H1 (cell line): ENCODE measurements at regions of chr2 and their contacts with region 1.

Region 1: DNA sequence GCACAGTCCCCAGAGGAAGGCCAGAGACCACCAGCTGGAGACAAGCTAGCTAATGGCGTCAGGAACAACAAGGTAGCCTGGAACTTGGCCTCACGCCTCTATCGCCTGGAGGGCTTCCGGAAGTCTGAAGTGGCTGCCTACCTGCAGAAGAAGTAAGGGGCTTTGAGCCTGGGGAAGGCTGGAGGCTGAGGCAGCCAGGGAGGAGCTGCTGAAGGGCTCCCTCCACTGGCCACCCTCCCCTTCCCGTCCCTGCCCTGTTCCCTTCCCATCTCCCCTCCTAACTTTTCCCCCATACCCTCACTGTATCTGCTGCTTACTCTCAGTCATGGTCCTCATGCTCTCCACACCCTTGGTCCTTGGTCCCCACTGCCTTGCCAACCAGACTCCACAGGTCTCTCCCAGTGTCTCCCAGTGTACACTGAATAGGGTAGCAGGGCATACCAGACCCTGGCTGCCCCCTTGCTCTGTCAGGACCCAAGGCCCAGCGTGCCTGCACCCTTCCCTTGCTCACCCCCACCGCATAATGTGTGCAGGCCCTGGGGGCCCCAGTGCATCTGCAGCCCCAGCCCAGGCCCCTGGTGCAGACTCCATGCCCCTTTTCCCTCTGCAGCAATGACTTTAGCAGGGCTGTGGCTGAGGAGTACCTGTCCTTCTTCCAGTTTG is 18.8 kb downstream of the PSD4 start:
- DNase-seq: no peak
- H3K4me3 ChIP-seq: no peak overlapping the region
- H3K27ac ChIP-seq: no peak overlapping the region
- H3K4me1 ChIP-seq: no peaks in the 10 kb centered on the region
- H3K27me3 ChIP-seq: no peaks in the 10 kb centered on the region
- CTCF ChIP-seq: peak; percentile 64 to 70 (median 69)
- EP300 ChIP-seq: no peak
- POLR2A ChIP-seq: no peak
- RAD21 ChIP-seq: peak; percentile 66 to 71

Region 2: GRCh38 chr2:113167115-113167932 is 25.2 kb before region 1 on chr2:
- CTCF ChIA-PET with region 1: interaction called, 31 read pairs
- POLR2A ChIA-PET with region 1: no interaction called
- DNase-seq: peak in 1 of 2 experiments; percentile 31
- H3K4me3 ChIP-seq: no peak overlapping the region
- H3K27ac ChIP-seq: no peak overlapping the region
- H3K4me1 ChIP-seq: peaks cover 0 to 4% (median 0%) of the 10 kb centered on the region in 4 experiments; a peak in 2 of 7 replicates
- H3K27me3 ChIP-seq: peaks cover 0 to 4% (median 3%) of the 10 kb centered on the region in 4 experiments; a peak in 1 of 7 replicates
- CTCF ChIP-seq: no peak
- EP300 ChIP-seq: no peak
- POLR2A ChIP-seq: no peak
- RAD21 ChIP-seq: no peak

Region 3: DNA sequence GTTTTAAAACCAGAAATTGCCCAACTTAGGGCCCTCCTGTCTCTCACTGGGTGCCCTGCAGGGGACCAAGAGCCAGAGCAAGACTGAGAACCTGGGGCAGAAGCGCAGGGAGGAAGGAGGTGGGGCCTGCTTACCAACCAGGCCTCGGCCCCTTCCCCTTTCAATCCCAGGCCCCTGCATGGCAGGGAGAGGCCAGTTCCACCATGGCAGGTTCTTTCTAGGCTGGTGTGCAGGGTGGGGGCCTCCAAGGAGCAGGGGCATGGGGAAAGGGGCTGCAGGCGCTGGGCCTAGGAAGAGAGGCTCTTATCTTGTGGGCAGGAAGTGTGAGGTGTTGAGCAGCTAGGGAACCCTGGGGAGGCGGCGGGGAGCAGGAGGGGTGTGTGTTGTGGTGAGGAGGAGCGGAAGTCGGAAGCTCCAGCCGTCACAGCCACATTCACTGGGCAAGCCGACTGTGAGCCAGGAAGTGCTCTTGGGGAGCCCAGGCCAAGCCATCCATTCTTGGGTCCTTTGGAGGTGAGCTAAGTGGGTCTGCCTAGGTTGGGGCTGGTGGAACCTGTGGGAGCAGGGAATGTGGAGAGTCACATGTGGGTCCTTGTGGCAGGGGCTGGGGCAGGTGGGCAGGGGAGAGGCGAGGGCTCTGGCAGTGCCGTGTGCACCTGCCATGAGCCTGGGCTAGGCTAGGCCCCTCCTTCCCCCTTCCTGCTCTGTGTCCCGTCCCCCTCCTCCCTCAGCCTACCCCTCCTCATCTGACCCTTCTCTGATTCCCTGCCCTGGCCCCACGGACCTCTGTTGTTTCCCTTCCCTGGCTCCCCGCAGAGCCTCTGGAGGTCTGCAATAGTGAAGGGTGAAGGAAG is 18.8 kb before region 1 on chr2 and contains the start of gene PSD4:
- CTCF ChIA-PET with region 1: interaction called, 19 read pairs
- POLR2A ChIA-PET with region 1: interaction called, 4 read pairs
- DNase-seq: no peak
- H3K4me3 ChIP-seq: no peak within 1 kb of the TSS
- H3K27ac ChIP-seq: no peak within 1 kb of the TSS
- H3K4me1 ChIP-seq: peaks cover 0 to 3% (median 0%) of the 10 kb centered on the region in 4 experiments; a peak in 3 of 7 replicates
- H3K27me3 ChIP-seq: no peaks in the 10 kb centered on the region
- CTCF ChIP-seq: no peak
- EP300 ChIP-seq: no peak
- POLR2A ChIP-seq: no peak
- RAD21 ChIP-seq: no peak
- total RNA-seq, gene PSD4: 1.2 and 1.3 TPM in 2 replicates

Region 4: GRCh38 chr2:113181258-113182051 is 11.1 kb before region 1 on chr2:
- CTCF ChIA-PET with region 1: interaction called, 19 read pairs
- POLR2A ChIA-PET with region 1: no interaction called
- DNase-seq: no peak
- H3K4me3 ChIP-seq: no peak overlapping the region
- H3K27ac ChIP-seq: no peak overlapping the region
- H3K4me1 ChIP-seq: peaks cover 0 to 6% (median 2%) of the 10 kb centered on the region in 4 experiments; a peak in 3 of 7 replicates
- H3K27me3 ChIP-seq: no peaks in the 10 kb centered on the region
- CTCF ChIP-seq: no peak
- EP300 ChIP-seq: no peak
- POLR2A ChIP-seq: no peak
- RAD21 ChIP-seq: no peak